Stomach (tissue), 19 donors: ENCODE measurements at regions of chr19 and their contacts with region 1.

Region 1: DNA sequence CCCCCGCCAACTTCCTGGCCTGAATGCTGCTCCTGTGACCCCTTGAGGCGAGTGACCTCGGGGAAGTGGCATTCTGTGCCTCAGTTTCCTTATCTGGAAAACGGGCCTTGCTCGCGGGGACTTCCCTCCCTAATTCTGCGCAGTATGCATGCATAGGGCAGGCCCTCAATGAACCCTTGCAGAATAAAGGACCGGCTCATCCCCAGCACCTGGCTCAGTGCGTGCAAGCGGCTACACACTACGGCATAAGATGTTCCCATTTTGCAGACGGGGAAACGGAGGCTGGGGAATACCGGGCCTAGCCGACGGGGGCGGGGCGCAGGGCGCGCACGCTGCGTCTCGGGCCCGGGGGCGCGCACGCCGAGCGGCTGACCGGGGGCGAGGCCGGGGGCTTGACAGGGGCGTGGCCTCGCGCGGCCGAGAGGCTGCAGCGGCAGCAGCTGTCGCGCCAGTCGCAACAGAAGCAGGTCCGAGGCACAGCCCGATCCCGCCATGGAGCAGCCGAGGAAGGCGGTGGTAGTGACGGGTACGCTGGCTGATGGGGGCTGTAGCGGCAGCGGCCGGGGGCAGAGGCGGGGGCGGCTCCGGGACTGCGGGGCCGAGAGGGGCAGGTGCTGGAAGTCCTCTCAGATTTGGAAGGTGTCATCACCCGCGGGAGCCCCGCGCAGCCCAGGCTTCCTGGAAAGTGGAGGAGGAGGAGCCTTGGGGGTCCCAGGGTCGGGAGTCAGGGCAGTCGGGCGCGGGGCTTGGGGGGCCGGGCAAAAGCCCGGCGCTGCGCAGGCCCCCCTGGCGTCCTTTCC is at the start of gene PGPEP1:
- DNase-seq: peak; percentile 80 to 91
- H3K4me3 ChIP-seq: peak within 1 kb of the TSS; percentile 75 to 98 (median 90)
- H3K27ac ChIP-seq: peak within 1 kb of the TSS; percentile 88 to 95 (median 91)
- H3K4me1 ChIP-seq: peaks cover 30 to 50% (median 46%) of the 10 kb centered on the region in 4 donors
- H3K27me3 ChIP-seq: no peaks in the 10 kb centered on the region
- CTCF ChIP-seq: no peak
- EP300 ChIP-seq: no peak
- POLR2A ChIP-seq: peak in 1 of 4 donors; percentile 10
- total RNA-seq, gene PGPEP1: 8.0 to 58.9 (median 22.9) TPM

Region 2: DNA sequence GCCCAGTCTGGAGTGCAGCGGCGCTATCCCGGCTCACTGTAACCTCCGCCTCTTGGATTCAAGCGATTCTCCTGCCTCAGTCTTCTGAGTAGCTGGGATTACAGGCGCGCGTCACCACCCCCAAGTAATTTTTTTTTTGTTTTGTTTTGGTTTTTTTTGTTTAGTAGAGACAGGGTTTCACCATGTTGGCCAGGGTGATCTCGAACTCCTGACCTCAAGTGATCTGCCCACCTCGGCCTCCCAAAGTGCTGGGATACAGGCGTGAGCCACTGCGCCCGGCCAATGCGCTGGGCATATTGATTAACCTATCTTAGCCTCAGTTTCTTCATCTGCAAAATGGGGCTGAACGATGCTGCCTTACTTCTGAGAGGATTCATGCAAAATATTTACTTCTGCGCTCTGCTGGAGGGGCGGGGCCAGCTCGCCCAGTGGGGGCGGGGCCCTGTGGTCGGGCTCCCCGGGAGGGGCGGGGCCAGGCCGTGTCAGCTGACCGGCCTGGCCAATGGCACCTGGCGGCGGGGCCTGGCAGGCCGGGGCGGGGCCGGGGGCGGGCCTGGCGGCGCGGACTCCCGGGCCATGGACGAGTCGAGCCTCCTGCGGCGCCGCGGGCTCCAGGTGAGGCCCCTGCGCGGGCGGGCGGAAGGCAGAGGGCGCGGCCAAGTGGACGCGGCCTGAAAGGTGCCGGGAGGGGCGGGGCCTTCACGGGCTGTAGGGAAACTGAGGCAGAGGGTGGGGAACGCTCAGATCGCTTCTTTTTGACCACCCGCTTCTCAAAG is 243.0 kb before region 1 on chr19 and contains the start of gene MAST3:
- intact Hi-C with region 1: no loop called
- DNase-seq: peak; percentile 92 to 94
- H3K4me3 ChIP-seq: peak within 1 kb of the TSS; percentile 42 to 51 (median 48)
- H3K27ac ChIP-seq: peak within 1 kb of the TSS in 2 of 5 donors; percentile 34 to 46
- H3K4me1 ChIP-seq: peaks cover 19 to 32% (median 25%) of the 10 kb centered on the region in 4 donors
- H3K27me3 ChIP-seq: peaks cover 0 to 32% (median 17%) of the 10 kb centered on the region in 3 donors
- CTCF ChIP-seq: no peak
- EP300 ChIP-seq: no peak
- POLR2A ChIP-seq: no peak
- total RNA-seq, gene MAST3: 1.7 to 29.0 (median 10.7) TPM

Region 3: GRCh38 chr19:18397242-18398202 is 57.1 kb after region 1 on chr19 and contains the start of gene LRRC25:
- intact Hi-C with region 1: loop called (anchors 10 kb)
- DNase-seq: peak in 1 of 2 donors; percentile 66
- H3K4me3 ChIP-seq: peak within 1 kb of the TSS; percentile 12 to 45 (median 35)
- H3K27ac ChIP-seq: peak within 1 kb of the TSS in 4 of 5 donors; percentile 8 to 61 (median 42)
- H3K4me1 ChIP-seq: peaks cover 17 to 83% (median 48%) of the 10 kb centered on the region in 4 donors
- H3K27me3 ChIP-seq: peaks cover 0 to 25% (median 7%) of the 10 kb centered on the region in 3 donors
- CTCF ChIP-seq: no peak
- EP300 ChIP-seq: no peak
- POLR2A ChIP-seq: no peak
- total RNA-seq, gene LRRC25: 2.9 to 11.2 (median 7.2) TPM in 3 of 5 donors, not detected in the others